ENCODE measurements at regions of chr1 and their contacts with region 1.

Region 1: DNA sequence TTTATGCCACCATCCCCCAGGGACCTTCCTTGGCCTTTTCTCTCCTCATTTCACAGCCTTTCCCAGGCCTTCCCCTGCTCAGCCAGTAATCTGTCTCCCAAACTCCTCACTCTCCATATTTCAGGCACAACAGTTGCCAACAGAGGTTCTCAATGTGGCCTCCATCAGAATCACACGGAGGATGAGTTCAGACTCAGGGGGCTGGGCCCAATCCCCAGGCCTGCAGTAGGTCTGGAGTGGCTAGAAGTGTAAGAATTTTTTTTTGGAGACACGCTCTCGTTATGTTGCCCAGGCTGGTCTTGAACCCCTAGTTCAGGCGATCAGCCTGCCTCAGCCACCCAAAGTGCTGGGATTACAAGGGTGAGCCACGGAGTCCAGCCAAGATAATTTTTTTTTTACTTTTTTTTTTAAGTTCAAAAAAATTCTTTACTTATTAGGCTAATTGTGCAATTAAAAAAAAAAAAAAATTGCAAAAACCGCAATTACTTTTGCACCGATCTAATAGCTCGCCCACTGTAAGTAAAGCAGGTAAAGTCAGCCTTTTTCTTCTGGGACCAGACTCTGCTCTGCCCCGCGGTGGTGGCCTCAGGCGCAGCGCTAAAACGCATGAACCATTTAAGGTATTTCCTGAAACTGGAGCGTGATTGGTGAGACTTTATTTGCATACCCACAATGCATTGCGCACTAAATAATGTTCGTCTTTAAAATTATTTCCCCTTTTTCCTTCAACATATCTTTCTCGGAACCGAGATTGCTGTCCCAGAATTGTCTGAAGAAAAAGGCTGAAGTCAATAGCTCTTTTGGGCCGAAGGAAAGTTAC is 18.7 kb downstream of the KIAA2013 start:
- DNase-seq: peak; percentile 93
- H3K4me3 Mint-ChIP-seq: peak overlapping the region; percentile 81
- H3K27ac Mint-ChIP-seq: peak overlapping the region; percentile 98
- H3K4me1 Mint-ChIP-seq: peaks cover 46% of the 10 kb centered on the region
- H3K27me3 Mint-ChIP-seq: peaks cover 16% of the 10 kb centered on the region

Region 2: DNA sequence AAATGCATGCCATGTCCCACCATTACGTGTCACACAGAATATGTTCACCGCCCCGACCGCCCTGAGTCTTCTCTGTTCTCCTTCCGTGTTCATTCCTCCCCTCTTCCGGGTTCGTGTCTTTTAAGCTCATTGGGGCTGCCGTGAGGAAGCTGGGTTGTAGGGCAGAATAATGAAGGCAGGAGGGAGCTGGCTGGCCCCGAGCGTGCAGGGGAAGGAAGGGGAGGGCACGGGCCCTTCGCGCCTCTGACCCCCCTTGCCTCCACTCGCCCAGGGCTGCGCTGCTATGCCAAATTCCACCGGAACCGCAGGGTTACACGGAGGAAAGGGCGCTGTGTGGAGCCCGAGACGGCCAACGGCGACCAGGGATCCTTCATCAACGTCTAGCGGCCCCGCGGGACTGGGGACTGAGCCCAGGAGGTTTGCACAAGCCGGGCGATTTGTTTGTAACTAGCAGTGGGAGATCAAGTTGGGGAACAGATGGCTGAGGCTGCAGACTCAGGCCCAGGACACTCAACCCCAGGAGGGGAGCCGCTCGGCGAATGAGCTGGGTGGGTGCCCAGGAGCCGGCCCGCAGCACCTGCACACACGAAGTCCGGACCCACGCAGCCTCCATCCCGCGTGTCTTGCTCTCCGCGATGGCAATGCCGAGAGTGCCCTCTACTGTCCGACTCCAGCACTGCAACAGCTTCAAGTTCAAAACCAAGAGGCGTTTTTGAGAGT is 188.0 kb before region 1 on chr1:
- CTCF ChIA-PET with region 1: interaction called, 3 read pairs
- POLR2A ChIA-PET with region 1: interaction called, 14 read pairs
- DNase-seq: peak; percentile 87
- H3K4me3 Mint-ChIP-seq: peak overlapping the region; percentile 56
- H3K27ac Mint-ChIP-seq: peak overlapping the region; percentile 85
- H3K4me1 Mint-ChIP-seq: peaks cover 19% of the 10 kb centered on the region
- H3K27me3 Mint-ChIP-seq: peaks cover 9% of the 10 kb centered on the region

Region 3: DNA sequence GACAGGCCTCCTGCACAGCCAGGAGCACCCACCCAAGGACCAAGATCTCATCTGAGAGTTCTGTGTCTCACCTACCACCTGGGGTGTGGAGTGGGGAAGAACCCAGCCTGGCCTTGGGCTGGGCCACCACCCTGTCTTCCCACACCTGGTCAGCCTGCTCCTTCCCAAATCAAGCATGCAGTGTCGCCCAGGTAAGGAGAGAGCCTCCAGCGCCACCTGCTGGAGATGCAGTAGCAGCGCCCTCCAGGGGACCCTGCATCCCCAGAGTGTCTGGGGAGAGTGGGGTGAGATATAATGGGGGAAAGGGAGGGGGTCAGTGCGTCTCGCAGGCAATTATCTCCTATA is 13.6 kb before region 1 on chr1:
- CTCF ChIA-PET with region 1: interaction called, 10 read pairs
- POLR2A ChIA-PET with region 1: interaction called, 31 read pairs
- DNase-seq: peak; percentile 74
- H3K4me3 Mint-ChIP-seq: no peak overlapping the region
- H3K27ac Mint-ChIP-seq: no peak overlapping the region
- H3K4me1 Mint-ChIP-seq: no peaks in the 10 kb centered on the region
- H3K27me3 Mint-ChIP-seq: peaks cover 37% of the 10 kb centered on the region

Region 4: DNA sequence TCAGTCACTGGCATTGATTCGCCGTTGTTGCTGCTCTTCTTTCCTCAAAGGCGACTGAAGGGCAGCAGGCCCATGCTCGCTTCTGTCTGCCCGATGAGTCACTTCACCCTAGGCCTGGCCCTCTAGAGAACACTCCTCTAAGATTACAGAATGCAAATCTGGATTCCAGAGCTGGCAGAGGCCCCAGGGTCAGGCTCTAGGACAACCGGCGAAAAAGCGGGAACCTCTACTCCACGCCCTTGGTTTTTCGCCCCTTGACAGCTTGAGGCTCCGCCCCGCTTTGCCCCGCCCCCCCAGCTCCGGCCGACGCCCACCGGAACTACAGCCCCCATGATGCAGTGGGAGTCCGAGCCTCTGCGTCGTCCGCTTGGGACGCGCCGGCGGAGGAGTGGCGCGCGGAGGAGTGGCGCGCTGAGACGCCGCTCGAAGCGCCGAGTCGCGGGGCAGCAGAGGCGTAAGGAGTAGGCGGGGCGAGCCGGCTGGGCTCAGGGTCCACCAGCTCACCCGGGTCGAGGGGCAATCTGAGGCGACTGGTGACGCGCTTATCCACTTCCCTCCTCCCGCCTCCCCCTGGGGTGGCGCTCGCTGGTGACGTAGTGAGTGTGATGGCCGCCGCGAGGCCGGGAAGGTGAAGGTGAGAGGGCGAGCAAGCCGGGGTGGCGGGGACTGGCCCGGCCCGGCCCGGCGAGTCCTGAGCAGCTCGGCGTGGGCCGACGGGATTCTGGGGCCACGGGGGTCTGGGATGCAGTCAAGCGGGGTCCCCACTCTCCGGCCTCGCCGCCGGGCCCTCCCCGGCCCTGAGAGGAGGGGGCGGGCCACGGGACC is 72.6 kb after region 1 on chr1 and contains the start of gene MFN2:
- CTCF ChIA-PET with region 1: interaction called, 4 read pairs
- POLR2A ChIA-PET with region 1: interaction called, 296 read pairs
- DNase-seq: peak; percentile 94
- H3K4me3 Mint-ChIP-seq: peak within 1 kb of the TSS; percentile 95
- H3K27ac Mint-ChIP-seq: peak within 1 kb of the TSS; percentile 86
- H3K4me1 Mint-ChIP-seq: peaks cover 51% of the 10 kb centered on the region
- H3K27me3 Mint-ChIP-seq: no peaks in the 10 kb centered on the region
- total RNA-seq, gene MFN2: 51.4 to 52.1 TPM

Region 5: GRCh38 chr1:12059722-12060464 is 152.4 kb after region 1 on chr1:
- CTCF ChIA-PET with region 1: no interaction called
- POLR2A ChIA-PET with region 1: interaction called, 127 read pairs
- DNase-seq: no peak
- H3K4me3 Mint-ChIP-seq: no peak overlapping the region
- H3K27ac Mint-ChIP-seq: peak overlapping the region; percentile 60
- H3K4me1 Mint-ChIP-seq: peaks cover 82% of the 10 kb centered on the region
- H3K27me3 Mint-ChIP-seq: peaks cover 5% of the 10 kb centered on the region

Region 6: DNA sequence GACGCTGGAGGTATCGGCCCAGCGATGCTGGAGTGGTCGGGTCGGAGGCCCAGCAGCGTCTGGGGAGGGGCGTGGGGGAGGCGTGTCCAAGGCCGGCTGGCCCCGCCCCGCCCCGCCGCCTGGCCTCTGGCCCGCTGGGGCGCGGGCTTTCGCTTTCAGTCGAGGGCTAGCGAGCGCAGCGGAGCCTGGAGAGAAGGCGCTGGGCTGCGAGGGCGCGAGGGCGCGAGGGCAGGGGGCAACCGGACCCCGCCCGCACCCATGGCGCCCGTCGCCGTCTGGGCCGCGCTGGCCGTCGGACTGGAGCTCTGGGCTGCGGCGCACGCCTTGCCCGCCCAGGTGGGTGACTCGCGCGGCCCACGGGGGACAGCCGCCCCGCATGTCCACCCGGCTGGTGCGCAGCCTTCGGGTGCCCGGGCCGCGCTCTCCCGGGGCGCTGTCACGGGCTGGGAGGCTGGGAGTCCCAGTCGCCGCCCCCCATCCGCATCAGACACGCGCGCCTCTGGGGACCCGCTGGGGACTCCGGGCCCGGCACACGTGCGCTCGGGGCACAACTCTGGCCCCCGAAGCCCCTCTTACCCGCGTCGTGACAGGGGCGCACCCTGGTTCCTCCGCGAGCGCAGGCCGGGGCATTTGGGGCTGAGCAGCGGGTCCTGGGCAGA is 259.5 kb after region 1 on chr1 and contains the start of gene TNFRSF1B:
- CTCF ChIA-PET with region 1: no interaction called
- POLR2A ChIA-PET with region 1: interaction called, 11 read pairs
- DNase-seq: peak; percentile 80
- H3K4me3 Mint-ChIP-seq: peak within 1 kb of the TSS; percentile 100
- H3K27ac Mint-ChIP-seq: peak within 1 kb of the TSS; percentile 98
- H3K4me1 Mint-ChIP-seq: peaks cover 77% of the 10 kb centered on the region
- H3K27me3 Mint-ChIP-seq: no peaks in the 10 kb centered on the region
- total RNA-seq, gene TNFRSF1B: 434 to 447 TPM